ENCODE measurements at regions of chr1 and their contacts with region 1.

Region 1: GRCh38 chr1:110209715-110210603 is at the start of gene KCNC4:
- DNase-seq: peak; percentile 95
- ATAC-seq: peak; percentile 95
- total RNA-seq, gene KCNC4: 5.1 TPM

Region 2: DNA sequence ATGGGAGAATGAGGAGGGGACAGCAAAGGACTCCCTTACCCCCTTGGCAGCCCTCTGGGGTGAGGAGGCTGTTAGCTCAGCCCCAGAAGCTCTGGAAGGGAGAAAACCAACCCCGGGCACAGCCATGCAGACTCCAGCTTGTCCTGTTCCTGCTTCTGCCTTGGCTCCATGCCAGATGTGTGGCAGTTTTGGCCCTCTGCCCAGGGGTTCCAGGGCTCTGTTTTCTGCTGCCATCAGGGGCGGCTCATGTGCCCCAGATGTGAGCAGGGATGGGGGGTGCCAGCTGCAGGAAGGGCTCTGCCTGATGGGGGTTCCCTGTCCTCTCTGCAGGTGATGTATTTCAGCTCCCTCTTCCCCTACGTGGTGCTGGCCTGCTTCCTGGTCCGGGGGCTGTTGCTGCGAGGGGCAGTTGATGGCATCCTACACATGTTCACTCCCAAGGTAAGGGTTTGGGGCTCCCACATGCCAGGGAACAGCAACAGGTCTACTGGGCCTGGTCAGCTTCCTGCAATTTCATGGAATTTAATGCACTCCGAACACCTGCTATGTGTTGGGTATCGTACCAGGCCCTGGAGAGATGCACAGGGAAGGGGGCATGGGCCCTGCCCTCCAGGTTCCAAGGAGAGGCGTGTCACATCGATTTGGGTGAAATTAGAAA is 33.5 kb before region 1 on chr1:
- intact Hi-C with region 1: no loop called
- DNase-seq: no peak
- ATAC-seq: peak; percentile 57

Region 3: GRCh38 chr1:110262846-110263631 is 53.1 kb after region 1 on chr1:
- intact Hi-C with region 1: loop called (anchors 2 kb)
- DNase-seq: no peak
- ATAC-seq: no peak

Region 4: DNA sequence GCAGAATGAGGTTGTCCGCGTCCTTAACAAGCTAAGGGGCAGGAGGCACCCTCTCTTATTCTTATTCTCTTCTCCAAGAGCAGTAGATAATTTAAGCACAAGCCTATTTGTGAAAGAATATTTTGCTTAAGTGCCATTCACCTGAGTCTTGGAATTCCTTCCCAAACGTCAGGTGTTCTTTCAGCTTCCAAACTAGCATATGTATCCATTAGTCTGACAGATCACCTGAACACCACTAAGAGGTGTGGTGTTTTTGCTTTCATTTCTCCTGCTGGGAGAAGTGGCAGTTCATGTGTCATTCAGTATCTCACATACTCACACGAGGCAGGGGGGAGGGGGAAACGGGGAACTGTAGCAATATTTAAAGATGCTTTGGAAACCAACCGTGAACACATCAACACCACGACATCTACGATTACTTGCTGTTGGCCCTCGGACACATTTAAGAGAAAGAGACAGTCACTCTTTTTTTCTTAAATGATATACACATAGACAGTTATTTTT is 83.7 kb after region 1 on chr1:
- intact Hi-C with region 1: no loop called
- DNase-seq: no peak
- ATAC-seq: no peak

Region 5: DNA sequence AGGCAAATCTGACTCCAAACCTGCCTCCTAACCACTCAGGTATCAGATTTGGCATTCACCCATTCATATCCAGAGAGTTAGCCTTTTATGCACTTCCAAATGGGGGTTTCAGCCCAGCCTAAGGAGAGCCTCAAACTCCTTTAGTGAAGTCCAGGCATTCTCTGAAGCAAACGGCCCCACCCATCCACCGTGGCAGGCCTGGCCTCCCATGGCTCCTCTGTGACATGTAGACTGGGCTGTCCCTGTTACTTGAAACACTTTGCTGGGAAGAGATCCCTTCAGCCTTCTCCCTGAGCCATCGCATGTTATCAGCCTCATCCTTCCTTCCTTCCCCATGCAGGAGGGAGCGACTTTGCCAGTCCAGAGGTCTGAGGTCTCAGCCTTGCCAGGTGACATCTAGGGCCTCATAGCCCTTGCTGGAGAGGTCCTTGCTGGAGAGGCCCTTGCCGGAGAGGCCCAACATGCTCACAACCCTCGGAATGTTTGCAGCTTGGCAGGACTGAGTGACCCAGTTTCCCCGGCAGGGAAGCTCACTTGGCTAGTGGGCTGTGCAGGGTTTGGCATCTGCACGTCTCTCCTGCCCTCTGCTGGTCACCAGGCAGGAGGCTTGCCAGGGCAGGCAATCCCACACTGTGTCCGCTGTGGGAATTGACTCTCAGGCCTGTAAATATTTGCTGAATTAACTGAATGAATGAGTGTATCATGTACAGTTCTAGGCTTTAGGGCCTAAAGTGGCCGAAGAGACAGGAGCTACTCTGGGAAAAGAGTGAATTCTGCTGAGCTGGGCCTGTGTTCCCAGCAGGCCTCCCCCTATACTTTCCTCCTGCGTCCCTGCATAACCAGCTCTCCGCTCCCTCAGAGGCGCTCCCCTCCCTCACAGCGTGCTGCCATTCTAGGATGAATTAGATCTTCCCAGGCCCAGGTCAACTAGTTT is 102.5 kb after region 1 on chr1:
- intact Hi-C with region 1: loop called (anchors 1 kb)
- DNase-seq: peak; percentile 88
- ATAC-seq: peak; percentile 97

Region 6: GRCh38 chr1:110407260-110408210 is 197.6 kb after region 1 on chr1 and contains the start of gene LAMTOR5:
- intact Hi-C with region 1: loop called (anchors 5 kb)
- DNase-seq: peak; percentile 97
- ATAC-seq: peak; percentile 96
- total RNA-seq, gene LAMTOR5: 261 TPM

Region 7: DNA sequence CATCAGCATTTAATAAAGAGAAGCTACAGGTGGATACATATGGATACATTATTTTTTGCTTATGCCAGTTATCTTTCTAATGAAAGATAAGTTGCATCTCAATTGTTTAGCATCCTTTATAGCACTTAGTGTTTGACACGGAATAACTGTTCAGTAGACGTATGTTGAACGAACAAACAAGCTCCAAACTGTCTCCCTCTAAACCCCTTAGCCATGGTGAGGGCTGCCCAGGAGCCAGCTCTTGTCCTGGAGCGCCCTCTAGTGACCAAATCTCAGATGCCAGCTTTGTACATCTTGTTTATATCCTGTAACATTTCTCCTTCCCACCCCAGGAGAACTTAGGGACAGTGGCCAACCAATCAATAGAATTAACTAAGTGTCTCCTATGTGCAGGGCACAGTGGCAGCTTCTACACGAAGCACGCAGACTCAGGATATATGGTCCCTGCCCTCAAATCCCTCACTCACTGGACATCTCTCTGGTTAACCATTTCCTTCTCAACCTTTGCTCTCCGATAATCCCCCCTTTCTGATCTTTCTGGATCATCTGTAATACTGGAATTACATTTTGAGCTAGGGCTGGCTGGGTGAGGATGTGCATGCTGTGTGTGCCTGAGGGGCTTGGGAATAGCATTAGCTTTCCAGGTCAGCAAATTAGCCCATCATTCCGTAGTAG is 286.1 kb after region 1 on chr1:
- intact Hi-C with region 1: loop called (anchors 5 kb)
- DNase-seq: no peak
- ATAC-seq: peak; percentile 75